MCF 10A (cell line): ENCODE measurements at regions of chr9 and their contacts with region 1.

Region 1: DNA sequence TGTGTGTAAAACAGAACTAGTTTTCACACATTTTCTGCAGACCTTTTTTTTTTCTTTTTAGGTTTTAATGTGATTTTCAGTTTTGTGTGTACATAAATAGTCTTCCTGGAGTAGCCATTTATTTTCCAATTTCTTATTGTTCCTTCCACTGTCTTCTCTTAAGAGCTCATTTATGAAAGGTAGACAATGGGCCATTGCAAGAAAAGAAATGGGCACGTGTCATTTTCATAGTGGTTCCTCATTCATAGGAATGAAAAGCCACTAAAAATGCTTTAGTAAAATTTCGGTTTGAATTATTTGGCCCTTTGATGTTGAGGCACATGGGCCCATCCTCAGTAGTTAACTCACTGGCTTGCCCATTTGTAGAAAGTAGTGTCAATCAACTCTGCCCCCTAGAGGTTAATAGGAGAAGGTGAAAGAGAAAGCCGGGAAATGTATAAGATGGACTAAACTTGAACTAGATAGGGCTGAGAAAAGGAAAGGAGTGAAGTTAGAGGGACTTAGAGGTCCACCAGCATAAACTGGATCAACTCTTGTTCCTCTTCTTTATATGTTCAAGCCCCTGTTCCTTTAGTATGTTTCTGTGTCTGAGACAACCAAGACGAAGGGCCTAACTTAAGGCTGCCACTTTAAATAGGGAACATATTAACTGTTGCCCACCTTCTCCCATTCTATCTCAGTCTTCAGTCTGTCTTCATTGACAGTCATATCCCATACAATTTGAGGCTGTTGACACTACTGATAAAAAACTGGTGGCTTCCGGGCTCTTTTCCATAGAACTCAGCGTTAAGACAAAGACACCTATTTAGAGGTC is 72.6 kb downstream of the SMARCA2 start:
- DNase-seq: peak; percentile 63
- H3K4me3 Mint-ChIP-seq: no peak overlapping the region
- H3K27ac Mint-ChIP-seq: no peak overlapping the region
- H3K4me1 Mint-ChIP-seq: no peaks in the 10 kb centered on the region
- H3K27me3 Mint-ChIP-seq: no peaks in the 10 kb centered on the region
- CTCF ChIP-seq: peak; percentile 60

Region 2: DNA sequence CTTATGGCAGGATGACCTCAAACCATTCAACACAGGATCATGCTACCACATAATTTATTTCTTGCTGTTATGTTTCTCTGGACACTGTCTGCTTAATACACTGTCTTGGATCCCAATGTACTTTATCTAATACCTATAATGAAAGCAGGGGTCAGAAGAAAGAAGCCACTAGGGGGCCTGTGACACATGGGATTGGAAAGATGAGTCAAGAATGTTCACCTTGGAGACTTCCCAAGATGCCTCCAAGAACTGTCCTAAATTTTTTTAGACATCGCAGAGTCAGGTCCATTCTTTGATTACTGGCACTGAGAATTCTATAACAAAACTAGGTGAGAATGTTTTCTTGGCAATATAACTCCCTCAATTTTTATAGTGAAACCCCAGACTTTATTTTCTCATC is 378.4 kb before region 1 on chr9:
- CTCF ChIA-PET with region 1: no interaction called
- POLR2A ChIA-PET with region 1: no interaction called
- intact Hi-C with region 1: loop called (anchors 5 kb)
- DNase-seq: peak; percentile 45
- H3K4me3 Mint-ChIP-seq: no peak overlapping the region
- H3K27ac Mint-ChIP-seq: no peak overlapping the region
- H3K4me1 Mint-ChIP-seq: peaks cover 17% of the 10 kb centered on the region
- H3K27me3 Mint-ChIP-seq: no peaks in the 10 kb centered on the region
- CTCF ChIP-seq: peak; percentile 16

Region 3: DNA sequence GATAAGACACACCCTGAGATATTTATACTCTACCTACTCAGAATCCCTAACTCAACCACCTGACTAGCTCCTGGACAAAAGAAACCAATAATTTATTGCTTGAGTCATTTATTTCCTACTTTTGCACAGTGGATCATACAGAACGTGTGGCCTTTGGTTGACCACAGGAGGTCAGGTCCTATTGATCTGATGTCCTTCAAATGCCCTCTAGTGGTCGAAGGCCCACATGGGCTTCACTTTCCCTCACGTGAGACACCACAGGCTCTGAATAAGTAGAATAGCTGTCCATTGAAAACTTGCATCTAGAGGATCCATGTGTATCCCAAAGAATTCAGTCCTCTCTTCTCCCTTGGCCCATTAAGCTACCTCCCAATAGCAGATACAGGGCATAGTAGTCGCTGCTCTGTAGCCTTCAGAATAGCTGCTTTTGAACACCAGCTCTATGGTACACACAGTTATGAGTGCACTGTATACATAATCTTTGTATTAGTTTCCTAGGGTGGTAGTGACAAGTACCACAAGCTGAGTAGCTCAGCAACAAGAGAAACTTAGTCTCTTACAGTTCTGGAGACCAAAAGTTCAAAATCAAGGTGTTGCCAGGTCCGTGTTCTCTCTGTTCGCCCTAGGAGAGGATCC is 250.1 kb before region 1 on chr9:
- CTCF ChIA-PET with region 1: no interaction called
- POLR2A ChIA-PET with region 1: no interaction called
- intact Hi-C with region 1: loop called (anchors 5 kb)
- DNase-seq: peak; percentile 62
- H3K4me3 Mint-ChIP-seq: no peak overlapping the region
- H3K27ac Mint-ChIP-seq: no peak overlapping the region
- H3K4me1 Mint-ChIP-seq: peaks cover 5% of the 10 kb centered on the region
- H3K27me3 Mint-ChIP-seq: peaks cover 19% of the 10 kb centered on the region
- CTCF ChIP-seq: peak; percentile 46

Region 4: GRCh38 chr9:1939926-1940368 is 147.8 kb before region 1 on chr9:
- CTCF ChIA-PET with region 1: interaction called, 4 read pairs
- POLR2A ChIA-PET with region 1: no interaction called
- intact Hi-C with region 1: loop called (anchors 1 kb)
- DNase-seq: peak; percentile 47
- H3K4me3 Mint-ChIP-seq: no peak overlapping the region
- H3K27ac Mint-ChIP-seq: no peak overlapping the region
- H3K4me1 Mint-ChIP-seq: no peaks in the 10 kb centered on the region
- H3K27me3 Mint-ChIP-seq: peaks cover 32% of the 10 kb centered on the region
- CTCF ChIP-seq: peak; percentile 58

Region 5: DNA sequence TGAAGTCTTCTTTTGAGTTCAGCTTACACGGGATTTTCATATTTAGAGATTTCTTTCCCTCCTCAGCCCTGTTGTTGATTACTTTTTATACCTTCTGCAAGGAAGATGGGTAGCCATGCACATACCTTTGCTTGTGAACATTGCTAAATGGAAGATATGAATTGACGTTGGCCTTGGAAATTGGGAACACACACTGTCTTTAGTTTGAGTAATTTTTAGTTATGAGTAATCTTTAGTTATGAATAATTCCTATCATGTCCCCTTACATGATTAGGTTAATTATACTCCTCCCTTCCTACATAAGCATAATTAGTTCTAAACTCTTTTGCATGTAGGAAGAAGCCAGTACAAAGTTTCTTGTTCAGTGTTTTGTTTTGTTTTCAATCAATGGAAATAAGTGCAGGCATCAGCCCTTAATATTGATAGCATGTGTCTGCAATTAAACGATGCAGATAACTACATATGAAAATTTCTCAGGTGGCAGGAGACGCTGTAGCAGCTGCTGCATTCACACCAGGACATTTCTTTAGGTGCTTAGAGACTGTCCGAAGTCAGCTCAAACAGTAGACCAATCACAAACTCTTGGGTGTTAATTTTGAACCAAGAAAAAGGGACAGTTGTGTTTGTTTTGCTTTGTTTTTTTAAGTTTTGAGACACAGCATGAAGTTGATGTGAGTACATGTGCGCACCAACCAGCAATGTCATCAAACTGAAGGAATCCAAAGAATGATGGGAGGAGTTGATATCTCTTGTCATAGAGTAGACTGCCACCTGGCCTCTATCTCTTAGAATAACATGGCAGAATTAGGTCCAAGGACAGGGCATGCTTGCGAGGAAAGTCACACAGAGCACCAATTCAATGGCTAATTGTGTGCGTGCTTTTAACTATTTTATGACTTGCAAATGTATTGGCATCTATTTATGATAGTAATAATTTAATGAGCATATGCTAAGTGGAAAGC is 21.1 kb before region 1 on chr9:
- CTCF ChIA-PET with region 1: interaction called, 10 read pairs
- POLR2A ChIA-PET with region 1: no interaction called
- intact Hi-C with region 1: no loop called
- DNase-seq: no peak
- H3K4me3 Mint-ChIP-seq: no peak overlapping the region
- H3K27ac Mint-ChIP-seq: no peak overlapping the region
- H3K4me1 Mint-ChIP-seq: no peaks in the 10 kb centered on the region
- H3K27me3 Mint-ChIP-seq: no peaks in the 10 kb centered on the region
- CTCF ChIP-seq: no peak

Region 6: DNA sequence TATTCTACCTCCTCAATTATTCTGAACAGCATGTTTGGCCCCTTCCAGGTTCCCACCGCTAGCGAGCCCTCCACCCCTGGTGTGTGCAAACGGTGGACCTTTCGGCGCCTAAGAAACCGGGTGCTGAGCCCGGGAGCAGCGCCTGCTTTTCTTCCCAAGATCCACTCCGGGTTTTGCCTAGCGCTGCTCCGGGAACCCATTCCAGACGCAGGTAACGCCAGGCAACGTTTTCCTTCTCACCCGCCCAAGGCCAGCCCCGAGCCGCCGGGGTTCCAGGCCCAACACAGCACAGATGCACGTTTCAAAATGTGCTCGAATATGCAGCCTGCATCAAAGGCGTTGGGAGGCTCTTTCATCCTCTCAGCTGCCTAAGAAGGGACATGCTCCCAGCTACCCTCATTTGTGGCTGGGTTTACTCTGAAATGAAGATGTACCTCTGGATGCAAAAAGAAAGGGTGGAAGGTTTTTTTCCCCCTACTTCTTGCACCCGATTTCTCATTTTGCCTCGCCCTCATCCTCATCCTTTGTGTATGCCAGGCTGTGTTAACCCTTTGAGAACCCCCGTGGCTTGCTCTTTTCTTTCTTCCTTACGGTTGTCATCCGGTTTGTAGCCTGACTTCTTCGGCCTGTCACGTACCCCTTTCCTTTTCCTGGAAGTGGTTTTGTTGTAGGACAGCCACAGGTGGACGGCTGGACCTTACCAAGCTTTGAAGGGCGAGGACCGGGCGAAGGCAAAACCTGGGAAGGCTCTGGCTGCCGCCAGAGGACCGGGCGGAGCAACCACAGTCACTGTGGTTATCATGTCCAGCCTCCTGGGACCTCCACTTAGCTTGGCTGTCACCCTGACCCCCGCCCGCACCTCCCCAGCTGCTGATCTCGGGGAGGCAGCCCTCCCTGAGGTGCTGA is 154.4 kb after region 1 on chr9:
- CTCF ChIA-PET with region 1: no interaction called
- POLR2A ChIA-PET with region 1: no interaction called
- intact Hi-C with region 1: no loop called
- DNase-seq: peak; percentile 84
- H3K4me3 Mint-ChIP-seq: peak overlapping the region; percentile 76
- H3K27ac Mint-ChIP-seq: peak overlapping the region; percentile 54
- H3K4me1 Mint-ChIP-seq: peaks cover 18% of the 10 kb centered on the region
- H3K27me3 Mint-ChIP-seq: no peaks in the 10 kb centered on the region
- CTCF ChIP-seq: no peak